ENCODE measurements at regions of chr12 and their contacts with region 1.

Region 1: DNA sequence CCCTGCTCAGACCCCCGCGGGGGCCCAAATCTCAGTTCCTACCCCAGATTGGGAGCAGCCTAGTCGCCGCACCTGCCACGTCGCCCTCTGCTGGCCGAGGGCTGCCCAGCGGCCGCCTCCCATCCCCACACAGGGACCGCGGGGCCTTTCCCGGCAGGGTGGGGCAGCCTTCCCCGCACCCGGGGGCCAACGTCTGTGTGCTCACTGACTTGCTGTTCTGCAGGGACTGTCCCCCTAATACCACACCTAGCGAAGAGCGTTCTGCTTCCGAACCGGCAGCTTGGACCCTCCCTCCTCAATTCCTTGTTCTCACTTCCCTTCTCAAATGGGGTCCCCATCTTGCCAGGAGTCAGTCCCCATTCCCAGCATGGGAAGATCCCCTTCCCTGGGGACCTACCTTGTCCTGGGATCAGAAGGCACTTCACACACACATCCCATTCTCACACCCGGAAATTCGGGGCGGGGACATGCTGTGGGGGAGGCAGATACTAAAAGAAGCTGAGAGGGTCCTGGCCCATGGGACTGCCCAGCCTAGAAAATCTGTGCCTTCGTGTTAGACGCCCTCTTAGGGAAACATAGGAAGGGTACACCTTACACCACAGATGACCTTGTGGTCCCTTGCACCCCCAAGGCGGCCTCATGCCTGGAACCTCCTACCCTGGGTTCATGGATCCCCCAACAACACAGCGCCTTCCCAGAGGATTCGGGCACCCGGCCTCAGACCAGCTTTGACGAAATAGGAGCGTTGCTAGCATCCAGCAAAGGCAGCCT is 16.4 kb downstream of the ACVRL1 start:
- DNase-seq: peak in 4 of 5 donors; percentile 33 to 48 (median 42)
- H3K4me3 ChIP-seq: no peak overlapping the region
- H3K4me3 Mint-ChIP-seq: peak overlapping the region in 6 of 8 donors; percentile 24 to 74 (median 54)
- H3K27ac ChIP-seq: no peak overlapping the region
- H3K27ac Mint-ChIP-seq: no peak overlapping the region
- H3K4me1 ChIP-seq: peaks cover 9% of the 10 kb centered on the region
- H3K4me1 Mint-ChIP-seq: peaks cover 3 to 14% (median 5%) of the 10 kb centered on the region in 4 donors
- H3K27me3 ChIP-seq: no peaks in the 10 kb centered on the region
- H3K27me3 Mint-ChIP-seq: no peaks in the 10 kb centered on the region

Region 2: GRCh38 chr12:51695241-51696010 is 228.3 kb before region 1 on chr12:
- CTCF ChIA-PET with region 1: no interaction called
- POLR2A ChIA-PET with region 1: no interaction called
- intact Hi-C with region 1: no loop called
- DNase-seq: no peak
- H3K4me3 ChIP-seq: no peak overlapping the region
- H3K4me3 Mint-ChIP-seq: no peak overlapping the region
- H3K27ac ChIP-seq: no peak overlapping the region
- H3K27ac Mint-ChIP-seq: no peak overlapping the region
- H3K4me1 ChIP-seq: no peaks in the 10 kb centered on the region
- H3K4me1 Mint-ChIP-seq: no peaks in the 10 kb centered on the region
- H3K27me3 ChIP-seq: no peaks in the 10 kb centered on the region
- H3K27me3 Mint-ChIP-seq: peaks cover 3 to 9% of the 10 kb centered on the region in 2 donors

Region 3: GRCh38 chr12:51886021-51886322 is 37.7 kb before region 1 on chr12:
- CTCF ChIA-PET with region 1: interaction called, 15 read pairs
- POLR2A ChIA-PET with region 1: no interaction called
- intact Hi-C with region 1: no loop called
- DNase-seq: peak; percentile 41 to 56 (median 45)
- H3K4me3 ChIP-seq: no peak overlapping the region
- H3K4me3 Mint-ChIP-seq: peak overlapping the region in 6 of 8 donors; percentile 17 to 60 (median 54)
- H3K27ac ChIP-seq: no peak overlapping the region
- H3K27ac Mint-ChIP-seq: peak overlapping the region; percentile 45 to 88 (median 83)
- H3K4me1 ChIP-seq: peaks cover 14% of the 10 kb centered on the region
- H3K4me1 Mint-ChIP-seq: peaks cover 7 to 17% (median 11%) of the 10 kb centered on the region in 4 donors
- H3K27me3 ChIP-seq: no peaks in the 10 kb centered on the region
- H3K27me3 Mint-ChIP-seq: no peaks in the 10 kb centered on the region

Region 4: GRCh38 chr12:51951199-51951842 is 27.6 kb after region 1 on chr12 and contains the start of gene ACVR1B:
- CTCF ChIA-PET with region 1: interaction called, 12 read pairs
- POLR2A ChIA-PET with region 1: no interaction called
- intact Hi-C with region 1: no loop called
- DNase-seq: peak; percentile 88 to 92 (median 89)
- H3K4me3 ChIP-seq: peak within 1 kb of the TSS; percentile 61 to 83
- H3K4me3 Mint-ChIP-seq: peak within 1 kb of the TSS; percentile 87 to 98 (median 95)
- H3K27ac ChIP-seq: peak within 1 kb of the TSS; percentile 63
- H3K27ac Mint-ChIP-seq: peak within 1 kb of the TSS; percentile 49 to 97 (median 95)
- H3K4me1 ChIP-seq: peaks cover 30% of the 10 kb centered on the region
- H3K4me1 Mint-ChIP-seq: peaks cover 29 to 52% (median 40%) of the 10 kb centered on the region in 4 donors
- H3K27me3 ChIP-seq: no peaks in the 10 kb centered on the region
- H3K27me3 Mint-ChIP-seq: peaks cover 0 to 2% of the 10 kb centered on the region in 2 donors
- total RNA-seq, gene ACVR1B: 10.8 to 12.6 TPM

Region 5: DNA sequence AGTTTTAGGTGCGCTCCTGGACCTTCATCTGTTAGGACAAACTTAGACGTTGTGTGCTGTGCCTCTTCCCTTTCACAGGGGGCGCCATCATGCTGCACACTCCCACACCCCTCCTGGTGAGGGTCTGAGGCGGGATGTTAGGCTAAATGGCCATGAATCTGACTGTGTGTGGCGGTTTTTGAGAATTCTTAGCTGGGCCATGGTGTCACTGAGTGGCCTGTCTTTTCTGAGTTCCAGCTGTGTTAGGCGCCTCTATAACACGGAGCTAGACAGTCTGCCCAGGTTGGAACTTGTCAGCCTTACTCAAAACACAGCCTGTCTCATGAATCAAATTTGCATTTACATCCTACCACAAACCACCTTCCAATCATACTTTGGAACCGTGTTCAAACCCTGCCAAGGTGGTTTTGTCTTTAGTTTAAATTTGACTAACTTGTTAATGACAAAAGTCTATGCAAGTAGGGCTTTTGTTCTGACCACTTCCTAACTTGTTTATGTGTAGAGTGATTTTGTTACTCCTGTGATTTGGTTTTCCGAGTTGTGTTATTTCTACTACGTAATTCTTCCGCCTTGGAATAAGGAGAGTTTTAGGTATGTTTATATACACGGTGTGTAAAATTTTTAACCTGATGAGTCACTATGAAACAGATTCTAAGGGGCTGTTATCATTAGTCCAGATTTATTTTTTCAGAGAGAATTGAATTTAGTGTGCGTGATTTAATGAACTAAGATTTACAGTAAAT is 47.4 kb after region 1 on chr12:
- CTCF ChIA-PET with region 1: interaction called, 11 read pairs
- POLR2A ChIA-PET with region 1: interaction called, 3 read pairs
- intact Hi-C with region 1: no loop called
- DNase-seq: peak; percentile 50 to 72 (median 53)
- H3K4me3 ChIP-seq: no peak overlapping the region
- H3K4me3 Mint-ChIP-seq: peak overlapping the region; percentile 31 to 86 (median 66)
- H3K27ac ChIP-seq: peak overlapping the region; percentile 12
- H3K27ac Mint-ChIP-seq: peak overlapping the region; percentile 66 to 91 (median 84)
- H3K4me1 ChIP-seq: peaks cover 62% of the 10 kb centered on the region
- H3K4me1 Mint-ChIP-seq: peaks cover 56 to 72% (median 62%) of the 10 kb centered on the region in 4 donors
- H3K27me3 ChIP-seq: no peaks in the 10 kb centered on the region
- H3K27me3 Mint-ChIP-seq: no peaks in the 10 kb centered on the region

Region 6: GRCh38 chr12:51980051-51980808 is 56.5 kb after region 1 on chr12:
- CTCF ChIA-PET with region 1: interaction called, 23 read pairs
- POLR2A ChIA-PET with region 1: interaction called, 4 read pairs
- intact Hi-C with region 1: loop called (anchors 1 kb)
- DNase-seq: peak; percentile 63 to 72 (median 67)
- H3K4me3 ChIP-seq: no peak overlapping the region
- H3K4me3 Mint-ChIP-seq: peak overlapping the region in 1 of 8 donors; percentile 44
- H3K27ac ChIP-seq: no peak overlapping the region
- H3K27ac Mint-ChIP-seq: peak overlapping the region in 6 of 7 donors; percentile 10 to 75 (median 42)
- H3K4me1 ChIP-seq: peaks cover 17% of the 10 kb centered on the region
- H3K4me1 Mint-ChIP-seq: peaks cover 19 to 35% (median 26%) of the 10 kb centered on the region in 4 donors
- H3K27me3 ChIP-seq: no peaks in the 10 kb centered on the region
- H3K27me3 Mint-ChIP-seq: no peaks in the 10 kb centered on the region